ENCODE measurements at regions of chr7 and their contacts with region 1.

Region 1: DNA sequence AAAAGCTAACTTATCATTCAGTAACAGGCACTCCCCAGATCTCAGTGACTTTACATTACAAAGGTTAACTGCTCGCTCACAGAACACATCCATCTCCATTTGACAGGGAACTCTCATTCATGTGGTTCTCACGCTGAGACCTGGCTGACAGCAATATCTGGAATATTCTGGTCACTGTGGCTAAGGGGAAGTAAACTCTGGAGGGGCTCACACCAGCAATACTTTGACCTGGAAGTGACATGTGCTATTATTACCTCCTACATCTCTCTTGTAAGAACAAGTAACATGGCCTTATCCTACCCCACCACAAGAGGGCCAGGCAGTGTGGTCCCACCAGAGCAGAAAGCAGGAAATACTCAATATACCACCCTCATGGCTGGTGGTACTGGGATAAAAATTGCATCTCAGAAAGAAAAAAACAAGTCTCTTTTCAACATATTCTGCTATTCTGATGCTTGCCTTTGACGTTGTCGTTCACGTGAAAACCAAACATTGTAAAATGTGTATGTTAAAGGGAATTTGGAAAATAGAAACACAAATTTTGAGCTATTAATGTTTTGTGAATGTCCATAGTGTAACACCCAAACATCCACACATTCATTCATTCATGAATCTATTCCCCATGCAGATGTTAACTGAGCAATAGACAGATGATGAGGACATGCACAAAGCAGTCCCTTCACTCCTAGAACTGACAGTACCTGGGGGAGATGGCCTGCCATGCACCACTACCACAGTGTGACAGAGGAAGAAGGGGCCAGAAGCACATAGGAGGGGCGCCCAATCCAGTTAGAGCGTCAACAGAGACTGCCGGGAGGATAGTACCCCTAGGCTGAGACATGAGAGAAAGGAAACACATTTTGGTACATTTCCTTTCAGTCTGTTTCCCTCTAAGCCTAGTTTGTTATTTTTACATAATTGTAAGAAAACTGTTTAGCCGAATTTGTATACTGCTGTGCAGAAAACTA is 166.0 kb upstream of the SP4 start:
- DNase-seq: peak; percentile 31
- CTCF ChIP-seq: peak; percentile 41

Region 2: GRCh38 chr7:21507626-21508343 is 245.9 kb after region 1 on chr7:
- in situ Hi-C with region 1: loop called (anchors 25 kb)
- DNase-seq: no peak
- CTCF ChIP-seq: peak; percentile 33

Region 3: DNA sequence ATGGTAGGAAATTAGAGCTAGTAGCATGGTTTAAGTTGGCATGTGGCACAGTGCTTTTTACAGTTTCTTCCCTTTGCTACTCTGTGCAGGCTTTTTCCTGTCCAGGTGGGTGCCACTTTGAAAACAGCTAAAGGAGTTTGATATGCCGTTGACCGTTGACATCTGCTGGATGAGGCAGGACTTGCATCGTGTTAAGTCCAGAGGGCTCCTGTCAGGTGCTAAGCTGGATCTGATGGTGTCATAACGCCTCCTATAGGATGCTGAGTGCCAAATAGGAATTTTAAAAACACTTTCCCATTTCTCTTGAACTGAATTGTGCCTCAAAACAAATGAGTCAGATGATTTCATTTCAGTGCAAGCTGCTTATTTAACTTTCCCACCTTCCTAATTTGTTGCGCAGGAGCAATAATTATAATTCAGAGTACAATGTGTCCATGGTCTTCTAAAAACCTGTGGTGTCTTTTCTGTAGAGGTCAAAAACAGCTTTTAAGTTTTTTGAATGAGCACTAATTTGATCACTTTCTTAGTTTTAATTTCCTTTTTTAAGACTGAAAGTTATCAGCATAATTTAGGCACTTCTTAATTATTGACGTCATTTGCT is 505.5 kb after region 1 on chr7:
- in situ Hi-C with region 1: loop called (anchors 25 kb)
- DNase-seq: peak; percentile 40
- CTCF ChIP-seq: peak; percentile 58

Region 4: GRCh38 chr7:22001345-22002004 is 739.6 kb after region 1 on chr7:
- in situ Hi-C with region 1: loop called (anchors 25 kb)
- DNase-seq: peak; percentile 72
- CTCF ChIP-seq: peak; percentile 68

Region 5: GRCh38 chr7:22103255-22103969 is 841.5 kb after region 1 on chr7:
- in situ Hi-C with region 1: no loop called
- DNase-seq: peak; percentile 84
- CTCF ChIP-seq: peak; percentile 69